Transverse colon (tissue), 4 donors: ENCODE measurements at regions of chr19 and their contacts with region 1.

Region 1: GRCh38 chr19:10928525-10929401 is at the starts of genes TIMM29 and YIPF2:
- DNase-seq: peak; percentile 98
- H3K4me3 ChIP-seq: peak within 1 kb of the TSS; percentile 65 to 92 (median 77)
- H3K27ac ChIP-seq: peak within 1 kb of the TSS; percentile 86 to 92 (median 89)
- H3K4me1 ChIP-seq: peaks cover 14 to 26% (median 18%) of the 10 kb centered on the region in 4 donors
- H3K27me3 ChIP-seq: no peaks in the 10 kb centered on the region
- CTCF ChIP-seq: no peak
- EP300 ChIP-seq: no peak
- POLR2A ChIP-seq: peak; percentile 71
- total RNA-seq, gene TIMM29: 40.0 to 45.3 (median 43.2) TPM
- total RNA-seq, gene YIPF2: 23.6 to 134 (median 58.4) TPM

Region 2: DNA sequence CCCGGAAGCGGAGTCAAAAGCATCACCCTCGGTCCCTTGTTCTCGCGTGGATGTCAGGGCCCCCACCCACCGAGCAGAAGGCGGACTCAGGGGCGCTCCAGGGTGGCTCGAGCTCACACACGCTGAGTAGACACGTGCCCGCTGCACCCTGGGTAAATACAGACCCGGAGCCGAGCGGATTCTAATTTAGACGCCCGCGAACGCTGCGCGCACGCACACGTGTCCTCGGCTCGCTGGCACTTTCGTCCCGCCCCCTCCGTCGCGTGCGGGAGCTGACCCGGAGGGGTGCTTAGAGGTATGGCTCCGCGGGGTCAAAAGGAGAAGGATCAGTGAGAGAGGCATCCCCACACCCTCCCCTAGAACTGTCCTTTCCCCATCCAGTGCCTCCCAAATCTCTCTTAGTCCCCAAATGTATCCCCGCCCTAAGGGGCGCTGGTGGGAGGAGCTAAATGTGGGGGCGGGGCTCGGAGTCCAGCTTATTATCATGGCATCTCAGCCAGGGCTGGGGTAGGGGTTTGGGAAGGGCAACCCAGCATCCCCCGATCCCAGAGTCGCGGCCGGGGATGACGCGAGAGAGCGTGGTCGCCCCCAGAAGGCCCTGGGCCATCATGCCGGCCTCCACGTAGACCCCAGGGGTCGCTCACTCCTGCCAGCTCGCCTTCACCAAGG is 639.5 kb before region 1 on chr19:
- in situ Hi-C with region 1: no loop called
- intact Hi-C with region 1: loop called (anchors 5 kb)
- DNase-seq: peak; percentile 56
- H3K4me3 ChIP-seq: peak overlapping the region in 2 of 4 donors; percentile 22 to 41
- H3K27ac ChIP-seq: no peak overlapping the region
- H3K4me1 ChIP-seq: peaks cover 36 to 64% (median 60%) of the 10 kb centered on the region in 4 donors
- H3K27me3 ChIP-seq: peaks cover 78% of the 10 kb centered on the region
- CTCF ChIP-seq: no peak
- EP300 ChIP-seq: no peak
- POLR2A ChIP-seq: no peak

Region 3: DNA sequence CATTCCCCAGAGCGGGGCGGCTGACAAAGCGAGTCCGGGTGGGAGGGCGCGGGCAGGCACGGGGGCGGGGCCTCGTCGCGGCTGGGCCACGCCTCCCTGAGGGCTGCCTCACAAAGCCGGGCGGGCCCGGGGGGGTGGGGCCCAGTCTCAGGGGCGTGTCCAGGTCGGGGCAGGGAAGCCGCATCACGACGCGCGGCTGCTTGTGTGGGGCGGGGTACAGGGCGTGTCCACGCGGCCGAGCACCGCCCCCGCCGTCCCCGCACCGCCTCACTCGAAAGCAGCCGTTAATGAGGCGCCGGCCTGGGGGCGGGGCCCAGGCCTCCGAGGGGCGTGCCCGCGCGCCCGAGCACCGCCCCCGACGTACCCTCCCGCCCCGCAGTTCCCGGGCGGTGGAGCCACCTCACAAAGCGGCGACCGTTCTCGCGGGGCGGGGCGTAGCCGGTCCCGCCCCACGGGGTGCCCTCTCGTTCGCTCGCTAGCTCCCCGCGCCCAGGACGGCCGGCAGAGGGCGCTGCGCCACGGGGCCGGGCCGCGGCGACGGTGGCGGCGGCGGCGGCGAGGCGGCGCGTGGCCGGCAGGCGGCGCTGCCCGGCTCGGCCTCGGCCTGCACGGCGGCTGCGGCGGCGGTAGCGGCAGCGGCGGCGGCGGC is 57.7 kb before region 1 on chr19 and contains the start of gene CARM1:
- in situ Hi-C with region 1: no loop called
- intact Hi-C with region 1: loop called (anchors 10 kb)
- DNase-seq: peak; percentile 100
- H3K4me3 ChIP-seq: peak within 1 kb of the TSS; percentile 75 to 96 (median 89)
- H3K27ac ChIP-seq: peak within 1 kb of the TSS; percentile 90 to 97 (median 92)
- H3K4me1 ChIP-seq: peaks cover 13 to 35% (median 25%) of the 10 kb centered on the region in 4 donors
- H3K27me3 ChIP-seq: no peaks in the 10 kb centered on the region
- CTCF ChIP-seq: peak in 4 of 5 experiments; percentile 43 to 65 (median 55)
- EP300 ChIP-seq: no peak
- POLR2A ChIP-seq: no peak
- total RNA-seq, gene CARM1: 24.9 to 47.6 (median 35.6) TPM

Region 4: GRCh38 chr19:10899151-10899653 is 29.6 kb before region 1 on chr19:
- in situ Hi-C with region 1: no loop called
- intact Hi-C with region 1: no loop called
- DNase-seq: peak; percentile 92
- H3K4me3 ChIP-seq: no peak overlapping the region
- H3K27ac ChIP-seq: peak overlapping the region; percentile 80 to 86 (median 83)
- H3K4me1 ChIP-seq: peaks cover 36 to 54% (median 47%) of the 10 kb centered on the region in 4 donors
- H3K27me3 ChIP-seq: no peaks in the 10 kb centered on the region
- CTCF ChIP-seq: no peak
- EP300 ChIP-seq: peak; percentile 67
- POLR2A ChIP-seq: peak; percentile 36